Panc1 (cell line): ENCODE measurements at regions of chr12 and their contacts with region 1.

Region 1: GRCh38 chr12:101697197-101697929 is at the start of gene CHPT1:
- DNase-seq: no peak
- ATAC-seq: peak; percentile 88
- H3K4me3 ChIP-seq: peak within 1 kb of the TSS; percentile 92 to 94
- H3K27ac ChIP-seq: peak within 1 kb of the TSS; percentile 83
- H3K4me1 ChIP-seq: peaks cover 28% of the 10 kb centered on the region
- H3K27me3 ChIP-seq: no peaks in the 10 kb centered on the region
- CTCF ChIP-seq: no peak
- total RNA-seq, gene CHPT1: 78.3 TPM

Region 2: GRCh38 chr12:101414533-101415119 is 282.7 kb before region 1 on chr12:
- CTCF ChIA-PET with region 1: no interaction called
- POLR2A ChIA-PET with region 1: no interaction called
- in situ Hi-C with region 1: no loop called
- intact Hi-C with region 1: loop called (anchors 10 kb)
- DNase-seq: peak; percentile 68
- ATAC-seq: peak; percentile 82
- H3K4me3 ChIP-seq: no peak overlapping the region
- H3K27ac ChIP-seq: no peak overlapping the region
- H3K4me1 ChIP-seq: no peaks in the 10 kb centered on the region
- H3K27me3 ChIP-seq: no peaks in the 10 kb centered on the region; the same call in 1 of the 2 replicates
- CTCF ChIP-seq: peak; percentile 61; the same call in 1 of the 2 replicates